SK-N-SH (cell line): ENCODE measurements at regions of chr2 and their contacts with region 1.

Region 1: DNA sequence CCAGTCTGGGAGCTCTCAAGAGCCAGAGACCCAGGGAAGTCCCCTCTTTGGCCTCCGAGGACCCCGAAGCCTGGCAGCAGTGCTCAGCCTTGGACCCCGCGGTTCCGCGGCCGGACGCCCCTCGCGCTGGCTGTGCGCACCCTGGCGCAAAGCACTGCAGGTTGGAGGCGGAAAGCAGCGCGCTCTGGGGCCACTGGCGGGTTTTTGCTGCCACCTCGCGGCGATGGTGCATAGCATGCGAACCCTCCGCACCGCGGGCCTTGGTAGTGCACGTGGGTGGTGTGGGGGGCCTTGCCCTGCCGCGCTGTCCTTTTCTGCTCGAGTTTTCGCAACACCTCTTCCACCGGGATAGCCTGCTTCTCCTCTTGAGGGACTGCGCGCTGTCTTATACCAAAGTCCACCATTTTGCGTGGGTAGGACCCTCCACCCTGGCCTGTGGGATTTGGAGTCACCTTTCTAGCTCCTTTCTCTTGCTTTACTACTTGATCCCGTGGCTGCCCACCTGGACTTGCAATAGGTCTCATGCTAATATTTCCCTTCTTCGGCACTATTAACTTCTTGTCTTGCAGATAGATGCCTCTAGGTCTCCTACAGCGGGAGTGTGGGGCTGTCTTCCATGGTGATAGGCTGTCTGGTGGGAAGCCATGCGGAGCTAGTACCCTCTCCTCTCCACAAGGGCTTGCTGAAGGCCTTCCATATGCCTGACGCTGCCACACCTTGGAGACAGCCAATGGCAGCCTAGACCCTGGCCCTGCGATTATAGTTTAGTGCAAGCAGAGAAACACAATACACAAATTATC is 14.3 kb downstream of the SIX3 start:
- DNase-seq: peak; percentile 94
- H3K4me3 ChIP-seq: peak overlapping the region; percentile 38; a peak in 3 of 4 replicates
- H3K27ac ChIP-seq: no peak overlapping the region
- H3K4me1 ChIP-seq: peaks cover 0 to 17% of the 10 kb centered on the region in 2 experiments; a peak in 1 of 4 replicates
- H3K27me3 ChIP-seq: no peaks in the 10 kb centered on the region
- CTCF ChIP-seq: peak; percentile 94
- EP300 ChIP-seq: no peak
- RAD21 ChIP-seq: peak; percentile 99

Region 2: GRCh38 chr2:44044281-44044720 is 911.5 kb before region 1 on chr2:
- CTCF ChIA-PET with region 1: interaction called, 39 read pairs
- POLR2A ChIA-PET with region 1: interaction called, 5 read pairs
- DNase-seq: peak; percentile 90
- H3K4me3 ChIP-seq: no peak overlapping the region
- H3K27ac ChIP-seq: no peak overlapping the region
- H3K4me1 ChIP-seq: peaks cover 0 to 6% of the 10 kb centered on the region in 2 experiments; a peak in 1 of 4 replicates
- H3K27me3 ChIP-seq: no peaks in the 10 kb centered on the region
- CTCF ChIP-seq: peak; percentile 91
- EP300 ChIP-seq: peak in 1 of 2 experiments; percentile 76; a peak in 2 of 4 replicates
- RAD21 ChIP-seq: peak; percentile 97

Region 3: GRCh38 chr2:44295607-44296359 is 660.0 kb before region 1 on chr2:
- CTCF ChIA-PET with region 1: no interaction called
- POLR2A ChIA-PET with region 1: no interaction called
- DNase-seq: no peak
- H3K4me3 ChIP-seq: no peak overlapping the region
- H3K27ac ChIP-seq: no peak overlapping the region
- H3K4me1 ChIP-seq: peaks cover 6 to 14% of the 10 kb centered on the region in 2 experiments; a peak in 2 of 4 replicates
- H3K27me3 ChIP-seq: no peaks in the 10 kb centered on the region
- CTCF ChIP-seq: no peak
- EP300 ChIP-seq: no peak
- RAD21 ChIP-seq: 0 out of 2 replicates have a peak, but pooled peaks have one; percentile 10

Region 4: GRCh38 chr2:44453259-44453658 is 502.5 kb before region 1 on chr2:
- CTCF ChIA-PET with region 1: interaction called, 17 read pairs
- POLR2A ChIA-PET with region 1: no interaction called
- DNase-seq: no peak
- H3K4me3 ChIP-seq: no peak overlapping the region
- H3K27ac ChIP-seq: no peak overlapping the region
- H3K4me1 ChIP-seq: no peaks in the 10 kb centered on the region; a peak in 1 of 4 replicates
- H3K27me3 ChIP-seq: no peaks in the 10 kb centered on the region
- CTCF ChIP-seq: no peak
- EP300 ChIP-seq: no peak
- RAD21 ChIP-seq: no peak

Region 5: DNA sequence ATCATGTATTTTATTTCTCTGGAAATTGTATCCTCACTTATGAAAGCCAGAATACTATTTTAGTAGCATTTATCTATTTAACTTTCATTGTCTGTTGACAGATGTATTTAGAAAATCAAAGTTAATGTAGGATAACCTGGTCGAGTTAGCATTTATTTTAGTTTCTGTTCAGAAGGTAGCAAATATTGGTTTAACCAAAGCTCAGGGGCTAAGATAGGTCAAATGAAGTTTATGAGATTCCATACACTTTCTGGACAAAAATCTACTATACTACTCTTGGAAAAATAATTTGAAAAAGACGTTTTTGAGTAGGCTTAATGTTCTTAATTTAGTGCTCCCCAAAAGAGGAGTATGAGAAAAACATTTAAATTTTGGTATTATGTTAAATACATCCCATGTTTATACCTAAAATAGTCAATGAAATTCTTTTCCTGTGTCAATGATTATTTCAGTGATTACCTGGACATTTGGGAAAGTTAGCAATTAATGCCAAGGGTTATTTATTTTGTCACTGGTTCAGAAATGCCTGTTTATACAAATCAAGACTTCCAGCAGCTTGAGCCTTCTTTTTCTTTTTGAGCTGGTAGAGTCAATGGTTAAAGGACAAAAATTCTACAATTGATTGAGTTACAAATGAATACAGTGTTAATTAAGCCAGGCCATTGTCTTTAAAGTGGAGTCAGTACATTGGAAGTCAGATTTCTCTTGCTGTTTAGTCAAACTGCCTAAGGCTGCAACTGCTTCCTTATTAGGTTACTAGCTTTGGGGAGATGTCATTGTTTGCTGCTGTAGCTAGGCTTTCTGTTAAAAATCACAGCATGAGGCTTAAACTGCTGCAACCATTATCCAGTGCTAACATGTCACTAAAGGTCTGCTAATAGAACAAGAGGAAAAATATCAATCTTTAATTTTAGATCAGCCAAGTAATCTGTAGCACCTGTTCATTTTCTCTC is 411.7 kb before region 1 on chr2:
- CTCF ChIA-PET with region 1: interaction called, 23 read pairs
- POLR2A ChIA-PET with region 1: no interaction called
- DNase-seq: peak; percentile 57
- H3K4me3 ChIP-seq: no peak overlapping the region
- H3K27ac ChIP-seq: peak overlapping the region in 1 of 2 experiments; percentile 79; a peak in 2 of 4 replicates
- H3K4me1 ChIP-seq: peaks cover 15 to 62% of the 10 kb centered on the region in 2 experiments
- H3K27me3 ChIP-seq: no peaks in the 10 kb centered on the region
- CTCF ChIP-seq: no peak
- EP300 ChIP-seq: peak in 1 of 2 experiments; percentile 86; a peak in 2 of 4 replicates
- RAD21 ChIP-seq: peak; percentile 36; the same call in 1 of the 2 replicates

Region 6: DNA sequence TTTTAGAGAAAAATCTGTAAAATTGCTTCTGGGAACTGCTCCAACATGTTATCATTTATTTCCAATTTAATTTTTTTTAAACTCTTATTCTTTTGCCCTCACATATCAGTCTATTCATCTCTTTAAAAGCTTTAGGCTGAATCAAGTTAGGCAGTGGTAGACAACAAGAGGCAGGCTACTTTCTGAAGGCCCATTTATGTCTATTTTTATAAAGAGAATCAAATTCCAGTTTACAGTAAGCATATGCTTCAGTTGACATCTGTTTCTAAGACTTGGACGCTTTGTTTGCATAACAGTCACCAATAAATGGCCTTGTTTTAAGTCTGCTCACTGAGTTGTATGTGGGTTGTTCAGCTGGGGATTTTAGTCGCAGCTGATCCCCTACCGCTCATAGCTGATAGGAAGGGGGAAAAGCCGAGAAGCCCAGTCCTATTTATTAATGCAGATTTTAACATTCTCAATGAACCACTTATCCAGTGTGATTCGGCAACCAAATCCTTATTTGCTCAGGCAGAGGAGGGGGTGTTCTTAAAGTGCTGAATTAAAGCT is 274.7 kb before region 1 on chr2:
- CTCF ChIA-PET with region 1: interaction called, 15 read pairs
- POLR2A ChIA-PET with region 1: interaction called, 3 read pairs
- DNase-seq: peak; percentile 78
- H3K4me3 ChIP-seq: peak overlapping the region; percentile 18 to 35; a peak in 3 of 4 replicates
- H3K27ac ChIP-seq: peak overlapping the region; percentile 49 to 100; a peak in 3 of 4 replicates
- H3K4me1 ChIP-seq: peaks cover 10 to 70% of the 10 kb centered on the region in 2 experiments; a peak in 2 of 4 replicates
- H3K27me3 ChIP-seq: no peaks in the 10 kb centered on the region
- CTCF ChIP-seq: no peak
- EP300 ChIP-seq: peak; percentile 34 to 97; a peak in 3 of 4 replicates
- RAD21 ChIP-seq: peak; percentile 48

Region 7: GRCh38 chr2:44770221-44771195 is 185.3 kb before region 1 on chr2:
- CTCF ChIA-PET with region 1: interaction called, 46 read pairs
- POLR2A ChIA-PET with region 1: interaction called, 4 read pairs
- DNase-seq: peak; percentile 64
- H3K4me3 ChIP-seq: no peak overlapping the region
- H3K27ac ChIP-seq: peak overlapping the region in 1 of 2 experiments; percentile 99; a peak in 2 of 4 replicates
- H3K4me1 ChIP-seq: peaks cover 0 to 91% of the 10 kb centered on the region in 2 experiments; a peak in 3 of 4 replicates
- H3K27me3 ChIP-seq: no peaks in the 10 kb centered on the region
- CTCF ChIP-seq: no peak; the same call in 1 of the 2 replicates
- EP300 ChIP-seq: no peak
- RAD21 ChIP-seq: peak; percentile 46

Region 8: DNA sequence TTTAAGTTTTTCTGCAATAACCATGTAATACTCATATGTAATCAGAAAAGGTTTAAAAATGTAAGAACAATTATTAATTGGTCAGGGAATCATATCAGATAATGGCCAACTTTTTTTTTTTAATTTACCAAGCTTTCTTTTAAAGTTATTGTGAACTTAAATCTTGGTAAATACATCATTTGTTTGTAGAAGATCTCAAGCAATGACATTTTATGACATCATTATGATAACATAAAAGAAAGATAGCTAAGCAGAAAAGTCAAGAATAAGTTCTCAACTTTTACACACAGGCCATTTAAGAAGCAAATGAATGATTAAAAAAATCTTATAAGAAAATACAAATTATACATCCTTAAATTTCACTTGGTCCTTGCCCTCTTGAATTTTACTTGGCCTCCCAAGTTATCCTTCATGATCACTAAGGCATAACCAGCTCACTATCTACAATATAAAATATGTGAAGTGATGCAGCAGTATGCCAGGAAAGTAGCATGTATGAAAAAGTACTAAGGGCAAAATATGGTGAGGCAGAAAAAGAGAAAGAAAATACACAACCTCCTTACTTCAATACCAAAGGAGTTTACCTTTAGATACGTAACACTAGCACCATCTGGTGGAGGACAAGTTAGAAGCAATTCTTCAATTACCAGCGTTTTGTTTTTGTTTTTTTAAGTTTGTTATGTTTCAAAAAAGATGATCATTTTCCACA is 538.6 kb after region 1 on chr2:
- CTCF ChIA-PET with region 1: interaction called, 25 read pairs
- POLR2A ChIA-PET with region 1: no interaction called
- DNase-seq: peak; percentile 56
- H3K4me3 ChIP-seq: peak overlapping the region in 1 of 2 experiments; percentile 7; a peak in 1 of 4 replicates
- H3K27ac ChIP-seq: no peak overlapping the region; a peak in 1 of 4 replicates
- H3K4me1 ChIP-seq: peaks cover 0 to 4% of the 10 kb centered on the region in 2 experiments; a peak in 1 of 4 replicates
- H3K27me3 ChIP-seq: no peaks in the 10 kb centered on the region
- CTCF ChIP-seq: peak; percentile 93
- EP300 ChIP-seq: no peak
- RAD21 ChIP-seq: peak; percentile 97